ENCODE measurements at regions of chr20 and their contacts with region 1.

Region 1: GRCh38 chr20:13898011-13898612 is 92.3 kb downstream of the SEL1L2 start:
- DNase-seq: peak; percentile 8
- H3K4me3 Mint-ChIP-seq: no peak overlapping the region
- H3K27ac Mint-ChIP-seq: no peak overlapping the region
- H3K4me1 Mint-ChIP-seq: no peaks in the 10 kb centered on the region
- H3K27me3 Mint-ChIP-seq: no peaks in the 10 kb centered on the region
- CTCF ChIP-seq: peak; percentile 38

Region 2: DNA sequence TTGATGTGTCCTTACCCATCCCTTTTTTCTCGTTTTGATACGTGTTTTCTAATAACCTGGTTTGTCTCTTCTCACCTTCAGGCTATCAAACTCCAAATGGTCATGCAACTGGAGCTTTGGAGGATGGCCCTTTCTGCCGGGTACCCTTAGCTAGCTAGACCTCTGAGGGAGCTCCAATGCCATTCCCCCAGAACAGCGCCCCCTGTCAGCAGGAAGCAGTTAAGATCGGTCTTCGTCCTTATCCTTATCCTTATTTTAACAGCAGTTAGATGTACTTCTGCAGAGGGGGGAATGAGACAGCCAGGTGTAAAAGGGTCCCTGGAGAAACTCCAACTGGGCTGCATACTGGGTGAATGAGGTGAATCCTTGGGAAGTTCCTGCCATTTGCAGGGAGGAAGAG is 55.1 kb after region 1 on chr20:
- CTCF ChIA-PET with region 1: interaction called, 3 read pairs
- intact Hi-C with region 1: loop called (anchors 10 kb)
- DNase-seq: no peak
- H3K4me3 Mint-ChIP-seq: no peak overlapping the region
- H3K27ac Mint-ChIP-seq: no peak overlapping the region
- H3K4me1 Mint-ChIP-seq: no peaks in the 10 kb centered on the region
- H3K27me3 Mint-ChIP-seq: no peaks in the 10 kb centered on the region
- CTCF ChIP-seq: no peak